Activated CD4-positive, alpha-beta T cell treated with anti-CD3 and anti-CD28 coated beads for 36 hours (primary cell): ENCODE measurements at regions of chr11 and their contacts with region 1.

Region 1: GRCh38 chr11:62427630-62428233 is 8.9 kb downstream of the SCGB1A1 start:
- DNase-seq: peak; percentile 36
- ATAC-seq: peak; percentile 63
- H3K4me3 Mint-ChIP-seq: peak overlapping the region; percentile 5
- H3K27ac Mint-ChIP-seq: peak overlapping the region; percentile 70
- H3K4me1 Mint-ChIP-seq: peaks cover 29% of the 10 kb centered on the region
- H3K27me3 Mint-ChIP-seq: no peaks in the 10 kb centered on the region

Region 2: GRCh38 chr11:62370743-62371440 is 56.8 kb before region 1 on chr11:
- CTCF ChIA-PET with region 1: no interaction called
- POLR2A ChIA-PET with region 1: no interaction called
- intact Hi-C with region 1: no loop called
- DNase-seq: peak; percentile 78
- ATAC-seq: peak; percentile 94
- H3K4me3 Mint-ChIP-seq: peak overlapping the region; percentile 58
- H3K27ac Mint-ChIP-seq: peak overlapping the region; percentile 94
- H3K4me1 Mint-ChIP-seq: peaks cover 7% of the 10 kb centered on the region
- H3K27me3 Mint-ChIP-seq: no peaks in the 10 kb centered on the region

Region 3: DNA sequence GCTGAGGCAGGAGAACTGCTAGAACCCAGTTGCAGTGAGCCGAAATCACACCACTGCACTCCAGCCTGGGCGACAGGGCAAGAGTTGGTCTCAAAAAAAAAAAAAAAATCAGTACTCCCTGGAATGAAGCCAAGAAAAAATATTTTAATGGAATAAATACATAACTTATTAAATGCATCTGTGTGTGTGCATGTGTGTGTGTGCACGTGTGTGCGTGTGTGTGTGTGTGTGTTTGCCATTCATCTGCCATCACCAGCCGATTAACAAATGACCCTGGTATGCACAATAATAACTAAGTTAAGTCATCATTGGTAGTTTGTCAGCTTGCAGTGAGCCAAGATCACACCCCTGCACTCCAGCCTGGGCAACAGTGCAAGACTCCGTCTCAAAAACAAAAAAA is 43.9 kb before region 1 on chr11:
- CTCF ChIA-PET with region 1: interaction called, 5 read pairs
- POLR2A ChIA-PET with region 1: no interaction called
- intact Hi-C with region 1: loop called in 1 of 2 experiments (anchors 1 kb)
- DNase-seq: no peak
- ATAC-seq: no peak
- H3K4me3 Mint-ChIP-seq: no peak overlapping the region
- H3K27ac Mint-ChIP-seq: no peak overlapping the region
- H3K4me1 Mint-ChIP-seq: peaks cover 10% of the 10 kb centered on the region
- H3K27me3 Mint-ChIP-seq: no peaks in the 10 kb centered on the region

Region 4: DNA sequence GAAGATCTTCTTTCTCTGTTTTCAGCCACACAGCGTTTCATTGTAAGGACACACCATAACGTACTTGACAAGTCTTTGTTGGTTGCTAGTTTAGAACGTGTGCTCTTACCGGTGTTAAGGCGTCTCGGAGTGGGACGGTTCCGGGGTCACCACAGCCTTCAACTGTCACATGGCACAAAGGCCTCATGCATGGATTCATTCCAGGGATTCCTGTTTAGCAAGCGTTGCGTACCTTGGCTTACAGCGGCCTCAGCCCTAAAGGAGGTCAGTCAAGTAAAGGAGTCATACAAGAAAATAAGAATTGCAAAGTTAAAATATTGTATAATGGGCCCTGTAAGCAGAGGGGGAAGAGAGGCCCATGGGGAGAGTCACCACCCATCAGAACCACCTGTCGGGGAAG is 11.1 kb before region 1 on chr11:
- CTCF ChIA-PET with region 1: interaction called, 19 read pairs
- POLR2A ChIA-PET with region 1: no interaction called
- intact Hi-C with region 1: no loop called
- DNase-seq: no peak
- ATAC-seq: no peak
- H3K4me3 Mint-ChIP-seq: no peak overlapping the region
- H3K27ac Mint-ChIP-seq: no peak overlapping the region
- H3K4me1 Mint-ChIP-seq: no peaks in the 10 kb centered on the region
- H3K27me3 Mint-ChIP-seq: no peaks in the 10 kb centered on the region

Region 5: GRCh38 chr11:62556108-62556871 is 128.6 kb after region 1 on chr11:
- CTCF ChIA-PET with region 1: interaction called, 56 read pairs
- POLR2A ChIA-PET with region 1: interaction called, 7 read pairs
- intact Hi-C with region 1: loop called (anchors 1 to 5 kb)
- DNase-seq: peak; percentile 92
- ATAC-seq: peak; percentile 65
- H3K4me3 Mint-ChIP-seq: peak overlapping the region; percentile 54
- H3K27ac Mint-ChIP-seq: peak overlapping the region; percentile 92
- H3K4me1 Mint-ChIP-seq: peaks cover 98% of the 10 kb centered on the region
- H3K27me3 Mint-ChIP-seq: no peaks in the 10 kb centered on the region

Region 6: GRCh38 chr11:62694455-62695167 is 266.9 kb after region 1 on chr11:
- CTCF ChIA-PET with region 1: interaction called, 12 read pairs
- POLR2A ChIA-PET with region 1: no interaction called
- intact Hi-C with region 1: loop called (anchors 1 to 10 kb)
- DNase-seq: peak; percentile 86
- ATAC-seq: peak; percentile 95
- H3K4me3 Mint-ChIP-seq: no peak overlapping the region
- H3K27ac Mint-ChIP-seq: no peak overlapping the region
- H3K4me1 Mint-ChIP-seq: peaks cover 5% of the 10 kb centered on the region
- H3K27me3 Mint-ChIP-seq: no peaks in the 10 kb centered on the region